Caco-2 (cell line): ENCODE measurements at regions of chr18 and their contacts with region 1.

Region 1: GRCh38 chr18:8341481-8342230 is 267.6 kb upstream of the RAB12 start:
- DNase-seq: peak; percentile 88 to 91
- H3K4me3 ChIP-seq: no peak overlapping the region
- H3K4me3 Mint-ChIP-seq: peak overlapping the region; percentile 42
- H3K27ac Mint-ChIP-seq: peak overlapping the region; percentile 76
- H3K4me1 ChIP-seq: peaks cover 72% of the 10 kb centered on the region
- H3K4me1 Mint-ChIP-seq: peaks cover 30% of the 10 kb centered on the region
- H3K27me3 ChIP-seq: no peaks in the 10 kb centered on the region
- H3K27me3 Mint-ChIP-seq: no peaks in the 10 kb centered on the region
- CTCF ChIP-seq: no peak

Region 2: DNA sequence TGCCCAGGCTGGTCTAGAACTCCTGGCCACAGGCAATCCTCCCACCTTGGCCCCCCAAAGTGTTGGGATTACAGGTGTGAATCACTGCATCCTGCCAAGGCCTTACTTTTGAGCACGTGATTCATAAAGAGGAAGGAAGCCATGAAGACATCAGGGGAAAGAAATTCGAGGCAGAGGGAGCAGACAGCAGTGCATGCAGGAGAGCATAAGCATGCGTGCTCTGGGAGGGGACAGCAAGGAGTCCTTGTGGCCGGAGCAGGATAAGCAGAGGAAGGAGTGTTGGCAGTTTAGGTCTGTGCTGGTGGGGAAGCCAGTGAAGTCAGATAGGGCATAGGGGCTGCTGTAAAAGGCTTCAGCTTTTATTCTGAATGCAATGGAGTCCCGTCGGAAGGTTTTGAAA is 132.9 kb before region 1 on chr18:
- CTCF ChIA-PET with region 1: no interaction called
- POLR2A ChIA-PET with region 1: interaction called, 3 read pairs
- intact Hi-C with region 1: loop called (anchors 1 kb)
- DNase-seq: no peak
- H3K4me3 ChIP-seq: no peak overlapping the region
- H3K4me3 Mint-ChIP-seq: no peak overlapping the region
- H3K27ac Mint-ChIP-seq: peak overlapping the region; percentile 89
- H3K4me1 ChIP-seq: peaks cover 19% of the 10 kb centered on the region
- H3K4me1 Mint-ChIP-seq: peaks cover 35% of the 10 kb centered on the region
- H3K27me3 ChIP-seq: no peaks in the 10 kb centered on the region
- H3K27me3 Mint-ChIP-seq: no peaks in the 10 kb centered on the region
- CTCF ChIP-seq: no peak

Region 3: GRCh38 chr18:8283891-8284585 is 57.6 kb before region 1 on chr18:
- CTCF ChIA-PET with region 1: no interaction called
- POLR2A ChIA-PET with region 1: no interaction called
- intact Hi-C with region 1: no loop called
- DNase-seq: no peak
- H3K4me3 ChIP-seq: no peak overlapping the region
- H3K4me3 Mint-ChIP-seq: no peak overlapping the region
- H3K27ac Mint-ChIP-seq: no peak overlapping the region
- H3K4me1 ChIP-seq: no peaks in the 10 kb centered on the region
- H3K4me1 Mint-ChIP-seq: no peaks in the 10 kb centered on the region
- H3K27me3 ChIP-seq: no peaks in the 10 kb centered on the region
- H3K27me3 Mint-ChIP-seq: no peaks in the 10 kb centered on the region
- CTCF ChIP-seq: no peak

Region 4: GRCh38 chr18:8359076-8359475 is 17.4 kb after region 1 on chr18:
- CTCF ChIA-PET with region 1: no interaction called
- POLR2A ChIA-PET with region 1: no interaction called
- intact Hi-C with region 1: no loop called
- DNase-seq: no peak
- H3K4me3 ChIP-seq: no peak overlapping the region
- H3K4me3 Mint-ChIP-seq: no peak overlapping the region
- H3K27ac Mint-ChIP-seq: no peak overlapping the region
- H3K4me1 ChIP-seq: peaks cover 8% of the 10 kb centered on the region; the same call in 1 of the 2 replicates
- H3K4me1 Mint-ChIP-seq: no peaks in the 10 kb centered on the region
- H3K27me3 ChIP-seq: no peaks in the 10 kb centered on the region
- H3K27me3 Mint-ChIP-seq: no peaks in the 10 kb centered on the region
- CTCF ChIP-seq: no peak